ENCODE measurements at regions of chr15 and their contacts with region 1.

Region 1: DNA sequence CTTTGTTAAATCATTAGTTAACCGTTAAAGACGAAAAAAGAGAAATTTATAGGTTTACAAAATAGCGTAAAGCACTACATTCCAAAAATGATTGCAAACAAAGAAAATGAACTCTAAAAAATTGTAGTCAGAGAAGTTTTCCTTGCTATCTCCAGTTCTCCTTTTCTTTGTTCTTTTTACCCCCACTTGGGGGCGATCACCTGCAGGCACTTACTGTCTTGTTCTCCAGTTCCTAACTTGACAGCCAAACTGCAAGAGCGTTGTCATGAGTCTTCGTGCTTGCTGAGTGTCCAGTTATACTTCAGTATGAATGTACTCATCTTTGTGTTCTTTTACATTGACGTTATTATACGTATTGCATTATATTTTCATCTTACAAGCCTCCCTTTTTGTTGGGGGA is 54.5 kb downstream of the CHD2 start:
- H3K4me3 ChIP-seq: no peak overlapping the region
- H3K27ac ChIP-seq: no peak overlapping the region
- H3K4me1 ChIP-seq: no peaks in the 10 kb centered on the region
- CTCF ChIP-seq: no peak

Region 2: DNA sequence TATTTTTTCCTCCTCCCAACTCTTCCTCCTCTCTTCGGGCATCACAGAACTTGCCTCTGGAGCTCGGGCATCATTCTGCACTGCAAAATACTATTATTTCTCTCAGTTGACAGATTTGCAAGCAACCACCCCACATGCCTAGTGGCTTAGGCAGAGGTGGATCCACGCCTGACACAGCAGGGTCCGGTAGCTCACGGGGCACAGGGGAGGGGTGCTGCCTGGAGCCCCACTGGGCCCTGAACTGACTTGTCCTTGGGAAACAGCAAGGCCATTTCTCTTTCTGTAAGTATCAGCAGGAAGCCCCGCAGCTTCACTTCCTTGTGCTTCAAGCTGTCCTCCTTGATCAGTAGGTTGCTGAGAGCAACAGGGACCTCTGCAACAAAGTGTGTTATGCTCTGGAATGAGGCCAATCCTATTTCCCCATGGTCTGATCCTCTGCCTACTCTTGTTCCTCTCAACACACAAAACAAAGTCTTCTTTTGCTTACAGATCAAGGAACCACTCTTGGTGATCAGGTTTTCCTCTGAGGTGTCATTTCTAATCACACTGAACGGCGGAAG is 368.1 kb before region 1 on chr15:
- CTCF ChIA-PET with region 1: no interaction called
- POLR2A ChIA-PET with region 1: no interaction called
- H3K4me3 ChIP-seq: no peak overlapping the region
- H3K27ac ChIP-seq: no peak overlapping the region
- H3K4me1 ChIP-seq: no peaks in the 10 kb centered on the region
- CTCF ChIP-seq: no peak

Region 3: GRCh38 chr15:92942706-92943105 is 11.9 kb before region 1 on chr15:
- CTCF ChIA-PET with region 1: interaction called, 33 read pairs
- POLR2A ChIA-PET with region 1: no interaction called
- H3K4me3 ChIP-seq: no peak overlapping the region
- H3K27ac ChIP-seq: no peak overlapping the region
- H3K4me1 ChIP-seq: peaks cover under 1% of the 10 kb centered on the region
- CTCF ChIP-seq: no peak

Measured in HEK293 (cell line).